Activated B cell treated with CpG ODN at 0.5 μM for 24 hours (primary cell): ENCODE measurements at regions of chr16 and their contacts with region 1.

Region 1: GRCh38 chr16:2926650-2927646 is 15.2 kb downstream of the FLYWCH1 start:
- DNase-seq: peak; percentile 67
- ATAC-seq: peak; percentile 100
- H3K4me3 Mint-ChIP-seq: no peak overlapping the region
- H3K27ac Mint-ChIP-seq: no peak overlapping the region
- H3K4me1 Mint-ChIP-seq: peaks cover 10% of the 10 kb centered on the region
- H3K27me3 Mint-ChIP-seq: no peaks in the 10 kb centered on the region
- CTCF ChIP-seq: peak; percentile 56

Region 2: GRCh38 chr16:2874912-2875362 is 52.0 kb before region 1 on chr16:
- CTCF ChIA-PET with region 1: interaction called, 7 read pairs
- POLR2A ChIA-PET with region 1: no interaction called
- intact Hi-C with region 1: loop called (anchors 2 kb)
- DNase-seq: peak; percentile 51
- ATAC-seq: peak; percentile 100
- H3K4me3 Mint-ChIP-seq: no peak overlapping the region
- H3K27ac Mint-ChIP-seq: no peak overlapping the region
- H3K4me1 Mint-ChIP-seq: no peaks in the 10 kb centered on the region
- H3K27me3 Mint-ChIP-seq: peaks cover 1% of the 10 kb centered on the region
- CTCF ChIP-seq: peak; percentile 54

Region 3: DNA sequence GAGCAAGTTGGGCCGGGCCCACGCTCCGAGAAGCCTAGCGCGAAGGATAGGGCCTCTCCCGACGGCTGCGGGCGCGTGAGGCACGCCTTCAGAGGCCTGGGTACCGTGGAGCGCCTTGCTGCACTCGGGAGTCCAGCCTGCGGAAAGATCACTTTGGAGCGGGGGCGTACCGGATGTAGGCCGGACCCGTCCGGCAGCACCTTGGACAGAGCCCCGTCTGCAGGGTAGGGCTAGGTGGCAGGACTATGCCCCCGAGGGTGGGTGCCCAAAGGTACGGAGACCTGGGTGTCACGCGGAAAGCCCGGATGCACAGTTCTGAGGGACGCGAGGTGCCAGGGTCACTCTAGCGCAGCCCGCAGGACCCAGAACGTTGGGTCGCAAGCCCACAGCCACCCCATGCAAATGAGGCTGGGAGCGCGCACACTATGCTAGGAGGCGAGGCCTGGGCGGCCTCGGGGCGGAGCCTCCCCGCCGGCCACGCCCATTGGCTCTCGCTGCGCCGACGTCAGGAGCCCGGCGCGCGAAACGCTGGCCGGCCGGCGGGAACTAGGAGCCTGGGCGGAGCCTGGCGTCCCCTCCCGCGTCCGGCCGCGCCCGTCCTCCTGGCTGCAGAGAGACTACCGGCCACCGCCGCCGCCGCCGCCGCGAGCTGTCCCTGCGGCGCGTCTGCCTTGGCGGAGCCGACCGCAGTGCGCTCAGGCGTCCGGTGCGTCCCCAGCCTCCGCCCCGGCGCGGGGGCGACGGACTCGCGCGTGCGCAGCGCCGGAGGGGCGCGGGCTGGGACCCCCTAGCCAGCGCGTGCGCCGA is 42.0 kb after region 1 on chr16 and contains the start of gene PAQR4:
- CTCF ChIA-PET with region 1: interaction called, 4 read pairs
- POLR2A ChIA-PET with region 1: no interaction called
- intact Hi-C with region 1: loop called (anchors 5 kb)
- DNase-seq: peak; percentile 86
- ATAC-seq: peak; percentile 80
- H3K4me3 Mint-ChIP-seq: peak within 1 kb of the TSS; percentile 77
- H3K27ac Mint-ChIP-seq: peak within 1 kb of the TSS; percentile 18
- H3K4me1 Mint-ChIP-seq: peaks cover 24% of the 10 kb centered on the region
- H3K27me3 Mint-ChIP-seq: peaks cover 12% of the 10 kb centered on the region
- CTCF ChIP-seq: no peak
- total RNA-seq, gene PAQR4: 2.4 and 2.7 TPM in 2 replicates